Thyroid gland (tissue), 4 donors: ENCODE measurements at regions of chr11 and their contacts with region 1.

Region 1: GRCh38 chr11:78742430-78742829 is 167.8 kb upstream of the NARS2 start:
- DNase-seq: peak; percentile 97 to 98
- H3K4me3 ChIP-seq: no peak overlapping the region
- H3K27ac ChIP-seq: peak overlapping the region in 2 of 3 donors; percentile 63 to 66
- H3K4me1 ChIP-seq: peaks cover 22 to 23% of the 10 kb centered on the region in 2 donors
- H3K27me3 ChIP-seq: no peaks in the 10 kb centered on the region
- CTCF ChIP-seq: peak in 2 of 6 experiments; percentile 29 to 33
- POLR2A ChIP-seq: no peak

Region 2: DNA sequence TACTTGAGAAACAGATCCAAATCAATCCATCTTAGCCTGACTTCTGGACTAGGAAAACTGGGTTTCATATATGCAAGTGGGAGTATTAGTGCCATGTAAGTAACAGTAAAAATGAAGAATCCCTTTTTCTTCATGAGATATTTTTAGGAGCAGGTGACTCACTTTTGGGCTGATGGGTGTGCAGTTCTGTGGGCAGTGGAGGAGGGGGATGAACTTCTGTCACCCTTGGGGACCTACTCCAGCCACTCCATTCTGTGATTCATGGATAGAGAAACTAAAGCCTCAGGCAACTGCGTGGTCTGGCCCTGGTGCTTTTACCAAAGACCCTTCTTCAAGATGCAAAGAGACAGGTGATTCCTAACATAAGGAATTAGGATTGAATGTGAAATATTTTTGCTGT is 40.9 kb after region 1 on chr11:
- intact Hi-C with region 1: loop called (anchors 2 kb)
- DNase-seq: no peak
- H3K4me3 ChIP-seq: no peak overlapping the region
- H3K27ac ChIP-seq: no peak overlapping the region
- H3K4me1 ChIP-seq: peaks cover 29 to 38% of the 10 kb centered on the region in 2 donors
- H3K27me3 ChIP-seq: no peaks in the 10 kb centered on the region
- CTCF ChIP-seq: no peak
- POLR2A ChIP-seq: no peak

Region 3: DNA sequence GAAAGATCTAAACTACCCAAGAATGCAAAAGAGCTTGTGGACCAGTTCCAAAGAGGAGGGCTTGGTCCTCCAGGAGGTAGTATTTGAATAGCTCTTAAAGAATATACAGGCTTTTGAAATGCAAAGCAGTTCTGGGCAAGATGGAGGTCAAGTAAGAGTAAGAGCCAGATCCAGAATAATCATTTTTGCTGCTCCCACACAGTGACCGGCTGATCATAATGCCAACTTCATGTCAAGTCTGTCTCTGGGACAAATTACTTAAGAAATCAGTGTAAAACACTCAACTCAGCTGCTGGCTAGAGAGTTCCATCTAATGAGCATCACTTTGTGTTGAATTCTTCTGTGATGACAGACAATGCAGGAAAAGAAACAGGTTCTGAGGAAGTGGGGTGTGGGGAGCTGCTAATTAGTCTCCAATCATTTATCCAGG is 83.2 kb after region 1 on chr11:
- intact Hi-C with region 1: loop called (anchors 10 kb)
- DNase-seq: peak in 1 of 2 donors; percentile 41
- H3K4me3 ChIP-seq: no peak overlapping the region
- H3K27ac ChIP-seq: peak overlapping the region in 1 of 3 donors; percentile 17
- H3K4me1 ChIP-seq: peaks cover 26 to 37% of the 10 kb centered on the region in 2 donors
- H3K27me3 ChIP-seq: no peaks in the 10 kb centered on the region
- CTCF ChIP-seq: no peak
- POLR2A ChIP-seq: no peak